HEK293T (cell line): ENCODE measurements at regions of chr19 and their contacts with region 1.

Region 1: DNA sequence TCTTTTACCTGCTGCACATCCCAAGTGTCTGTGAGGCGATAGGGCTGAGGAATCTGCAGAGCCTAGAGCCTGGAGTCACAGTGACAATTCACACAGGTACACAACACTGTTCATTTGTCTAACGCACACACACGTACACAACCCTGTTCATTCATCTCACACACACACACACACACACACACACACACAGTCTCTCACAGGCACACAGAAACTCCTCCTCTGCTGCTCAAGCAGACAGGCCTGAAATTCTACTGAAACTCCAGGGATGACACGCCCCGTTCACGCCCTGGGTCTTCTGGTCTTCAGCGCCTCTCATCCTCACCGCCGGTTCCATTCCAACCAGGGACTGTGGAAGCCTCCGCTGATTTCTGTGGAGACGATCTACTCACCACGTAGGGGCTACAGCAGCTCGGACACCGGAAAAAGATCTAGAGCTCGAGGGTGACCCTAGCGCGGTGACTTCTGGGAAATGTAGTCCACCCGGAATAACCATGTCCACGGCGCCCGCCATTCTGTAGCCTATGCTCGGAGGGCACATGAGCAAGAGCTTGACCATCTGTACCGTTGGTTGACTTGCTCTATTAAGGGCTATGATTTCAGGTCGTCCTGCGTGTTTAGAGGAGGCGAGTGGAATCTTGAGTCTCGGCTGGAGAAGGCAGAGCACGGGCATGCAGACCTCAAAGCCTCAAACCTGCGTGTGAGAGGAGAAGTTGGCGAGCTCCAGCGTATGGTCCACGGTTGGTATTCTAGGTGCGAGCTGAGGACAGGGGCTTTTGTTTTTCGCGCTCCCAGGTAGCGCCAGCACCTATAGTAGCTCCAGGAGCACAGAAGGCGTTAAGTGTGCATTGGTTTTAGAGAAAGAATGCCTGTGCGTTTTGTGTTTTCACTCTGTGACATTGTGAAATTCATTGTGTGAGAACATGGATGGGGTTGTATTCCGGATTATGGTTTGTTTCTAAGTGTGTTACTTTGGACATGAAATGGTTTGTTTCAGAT is 33.4 kb downstream of the ZNF45 start:
- DNase-seq: peak; percentile 81

Region 2: GRCh38 chr19:43855616-43856015 is 46.1 kb before region 1 on chr19:
- CTCF ChIA-PET with region 1: no interaction called
- POLR2A ChIA-PET with region 1: no interaction called
- DNase-seq: no peak

Region 3: DNA sequence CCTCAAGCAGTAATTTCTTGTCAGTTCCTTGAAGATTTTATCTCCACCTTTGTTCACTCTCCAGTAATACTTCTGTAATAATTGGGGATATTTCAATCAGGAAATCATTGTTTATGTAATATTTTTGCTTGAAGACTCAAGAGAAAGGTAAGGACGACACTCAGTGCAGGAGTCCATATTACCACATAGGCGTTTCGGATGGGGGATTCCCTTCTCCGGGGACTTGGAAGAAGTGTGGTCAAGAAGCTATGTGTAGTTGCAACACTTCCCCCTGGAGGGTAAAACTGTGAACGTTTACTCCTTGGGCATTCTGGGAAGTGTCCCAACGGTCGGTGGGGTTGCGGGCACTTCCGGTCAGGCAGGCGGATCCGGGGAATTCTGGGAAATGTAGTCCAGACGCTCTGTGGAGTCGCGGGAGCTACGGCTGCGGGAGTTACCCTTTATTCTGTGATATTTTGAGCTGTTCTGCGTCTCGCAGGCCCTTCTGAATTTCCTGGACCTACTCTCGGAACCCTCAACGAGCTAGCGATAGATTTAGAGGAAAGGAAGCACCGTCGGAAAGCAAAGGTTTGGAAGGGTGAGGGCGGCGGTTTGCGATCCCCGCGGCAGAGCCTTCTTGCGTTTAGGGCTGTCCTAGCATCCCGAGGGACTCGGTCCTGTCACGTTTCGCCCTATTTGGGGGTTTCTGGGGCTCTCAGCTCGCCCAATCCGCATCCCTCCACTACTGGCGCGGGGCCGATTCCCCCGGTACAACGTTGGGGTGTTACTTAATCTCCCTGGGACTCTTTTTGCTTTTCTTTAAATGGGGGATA is 49.3 kb after region 1 on chr19 and contains the start of gene ZNF221:
- CTCF ChIA-PET with region 1: no interaction called
- POLR2A ChIA-PET with region 1: interaction called, 11 read pairs
- DNase-seq: peak; percentile 91